Activated B cell treated with CpG ODN at 0.5 μM for 24 hours (primary cell): ENCODE measurements at regions of chr20 and their contacts with region 1.

Region 1: DNA sequence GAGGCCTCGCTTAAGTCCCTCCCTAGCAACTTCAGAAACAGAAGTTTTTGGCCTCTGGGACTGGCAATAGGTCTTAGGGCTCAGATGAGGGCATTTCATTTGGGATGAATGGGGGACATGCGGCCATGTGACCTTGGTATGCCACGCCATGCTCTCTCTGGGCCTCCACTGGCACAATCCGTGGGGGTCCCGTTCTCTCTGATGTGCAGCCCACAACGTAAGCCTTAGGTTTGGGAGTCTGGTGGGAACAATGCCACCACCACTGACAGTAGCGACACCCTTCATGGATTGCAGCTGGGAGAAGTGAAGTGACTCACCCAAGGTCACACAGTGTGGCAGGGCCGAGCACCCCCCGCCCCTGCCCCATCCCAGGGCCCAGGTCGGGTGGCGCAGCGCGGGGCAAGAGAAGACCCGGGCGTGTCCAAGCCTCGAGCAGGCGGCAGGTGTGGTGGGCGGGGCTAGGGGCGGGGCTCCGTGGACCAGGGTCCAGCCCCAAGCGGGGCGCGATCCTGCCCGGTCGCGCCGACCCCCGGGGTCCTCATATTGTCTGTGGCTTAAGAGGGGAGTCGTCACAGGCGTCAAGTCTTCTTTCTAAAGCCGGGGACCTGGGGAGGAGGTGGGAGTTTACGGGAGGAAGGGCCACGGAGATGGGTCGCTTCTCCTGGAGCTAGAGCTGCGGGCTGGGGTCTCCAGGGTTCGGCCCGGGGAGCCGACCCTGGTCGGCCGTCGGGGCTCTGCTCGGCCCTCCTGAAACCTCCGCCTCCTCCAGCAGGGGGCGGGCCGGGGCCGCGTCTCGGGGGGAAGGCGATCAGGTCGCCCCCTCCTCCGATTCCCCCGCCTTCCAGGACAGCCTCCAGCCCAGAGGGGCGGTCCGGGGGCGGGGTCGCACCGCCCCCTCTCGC is 698 bp upstream of the CEBPB start:
- DNase-seq: no peak
- ATAC-seq: peak; percentile 69
- H3K4me3 Mint-ChIP-seq: peak overlapping the region; percentile 58
- H3K27ac Mint-ChIP-seq: no peak overlapping the region
- H3K4me1 Mint-ChIP-seq: peaks cover 27% of the 10 kb centered on the region
- H3K27me3 Mint-ChIP-seq: peaks cover 8% of the 10 kb centered on the region
- CTCF ChIP-seq: no peak

Region 2: DNA sequence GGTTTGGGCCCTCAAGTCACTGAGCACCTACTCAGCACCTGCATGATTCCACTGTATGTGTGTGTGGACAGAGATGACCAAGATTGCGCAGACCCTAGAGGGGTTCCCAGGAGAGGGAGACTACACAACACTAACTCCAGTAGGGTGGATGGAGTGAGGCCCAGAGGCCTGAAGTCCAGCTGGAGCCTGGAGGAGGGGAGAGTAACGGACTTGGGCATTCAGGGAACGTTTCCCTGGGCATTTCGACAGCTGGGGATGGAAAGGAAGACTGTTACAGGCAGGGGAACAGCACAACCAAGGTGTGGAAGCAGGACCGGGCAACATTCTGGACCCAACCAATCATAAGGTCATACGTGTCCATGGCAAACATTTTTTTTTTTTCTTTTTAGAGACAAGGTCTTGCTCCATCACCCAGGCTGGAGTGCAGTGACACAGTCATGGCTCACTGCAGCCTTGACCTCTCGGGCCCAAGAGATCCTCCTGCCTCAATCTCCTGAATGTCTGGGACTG is 10.4 kb before region 1 on chr20:
- CTCF ChIA-PET with region 1: interaction called, 3 read pairs
- POLR2A ChIA-PET with region 1: interaction called, 10 read pairs
- intact Hi-C with region 1: no loop called
- DNase-seq: no peak
- ATAC-seq: no peak
- H3K4me3 Mint-ChIP-seq: no peak overlapping the region
- H3K27ac Mint-ChIP-seq: no peak overlapping the region
- H3K4me1 Mint-ChIP-seq: no peaks in the 10 kb centered on the region
- H3K27me3 Mint-ChIP-seq: no peaks in the 10 kb centered on the region
- CTCF ChIP-seq: no peak

Region 3: DNA sequence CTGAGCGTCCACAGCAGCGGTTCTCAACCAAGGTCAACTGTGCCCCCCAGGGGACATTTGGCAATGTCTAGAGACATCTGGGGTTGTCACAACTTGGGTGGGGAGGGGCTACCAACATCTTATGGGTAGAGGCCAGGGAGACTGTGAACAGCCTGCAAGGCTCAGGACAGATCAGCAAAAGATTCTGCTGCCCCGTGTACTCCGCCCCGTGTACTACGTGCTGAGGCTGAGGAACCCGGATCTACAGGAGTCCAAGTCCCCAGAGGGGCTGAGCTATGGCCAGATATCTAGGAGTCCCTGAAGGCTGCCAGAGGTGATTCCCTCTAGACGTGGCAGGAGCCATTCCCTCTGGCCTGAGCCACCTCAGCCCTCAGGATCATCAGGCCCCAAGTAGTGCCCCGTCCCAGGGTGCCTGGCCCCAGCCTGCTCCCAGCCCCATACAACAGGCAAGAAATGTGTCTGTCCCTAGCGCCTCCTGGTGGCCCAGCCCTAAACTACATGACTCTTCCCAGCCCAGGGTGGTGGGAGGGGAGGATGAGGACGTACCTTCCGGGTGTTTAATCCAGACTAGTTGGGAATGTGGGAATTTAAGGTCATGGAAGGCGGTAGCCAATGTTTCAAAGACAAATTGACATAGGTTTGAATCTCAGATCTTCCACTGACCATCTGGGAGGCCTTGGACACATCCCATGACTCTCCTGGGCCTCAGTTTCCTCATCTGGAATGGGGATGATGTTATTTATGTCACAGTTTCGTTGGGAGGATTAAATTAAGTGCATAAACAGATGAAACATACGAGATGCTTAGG is 270.7 kb after region 1 on chr20:
- CTCF ChIA-PET with region 1: interaction called, 47 read pairs
- POLR2A ChIA-PET with region 1: interaction called, 8 read pairs
- intact Hi-C with region 1: loop called (anchors 1 kb)
- DNase-seq: peak; percentile 69
- ATAC-seq: peak; percentile 86
- H3K4me3 Mint-ChIP-seq: no peak overlapping the region
- H3K27ac Mint-ChIP-seq: no peak overlapping the region
- H3K4me1 Mint-ChIP-seq: peaks cover 5% of the 10 kb centered on the region
- H3K27me3 Mint-ChIP-seq: peaks cover 24% of the 10 kb centered on the region
- CTCF ChIP-seq: peak; percentile 42

Region 4: GRCh38 chr20:50546729-50547314 is 356.9 kb after region 1 on chr20:
- CTCF ChIA-PET with region 1: no interaction called
- POLR2A ChIA-PET with region 1: interaction called, 11 read pairs
- intact Hi-C with region 1: no loop called
- DNase-seq: no peak
- ATAC-seq: peak; percentile 78
- H3K4me3 Mint-ChIP-seq: peak overlapping the region; percentile 79
- H3K27ac Mint-ChIP-seq: peak overlapping the region; percentile 85
- H3K4me1 Mint-ChIP-seq: peaks cover 75% of the 10 kb centered on the region
- H3K27me3 Mint-ChIP-seq: no peaks in the 10 kb centered on the region
- CTCF ChIP-seq: no peak

Region 5: DNA sequence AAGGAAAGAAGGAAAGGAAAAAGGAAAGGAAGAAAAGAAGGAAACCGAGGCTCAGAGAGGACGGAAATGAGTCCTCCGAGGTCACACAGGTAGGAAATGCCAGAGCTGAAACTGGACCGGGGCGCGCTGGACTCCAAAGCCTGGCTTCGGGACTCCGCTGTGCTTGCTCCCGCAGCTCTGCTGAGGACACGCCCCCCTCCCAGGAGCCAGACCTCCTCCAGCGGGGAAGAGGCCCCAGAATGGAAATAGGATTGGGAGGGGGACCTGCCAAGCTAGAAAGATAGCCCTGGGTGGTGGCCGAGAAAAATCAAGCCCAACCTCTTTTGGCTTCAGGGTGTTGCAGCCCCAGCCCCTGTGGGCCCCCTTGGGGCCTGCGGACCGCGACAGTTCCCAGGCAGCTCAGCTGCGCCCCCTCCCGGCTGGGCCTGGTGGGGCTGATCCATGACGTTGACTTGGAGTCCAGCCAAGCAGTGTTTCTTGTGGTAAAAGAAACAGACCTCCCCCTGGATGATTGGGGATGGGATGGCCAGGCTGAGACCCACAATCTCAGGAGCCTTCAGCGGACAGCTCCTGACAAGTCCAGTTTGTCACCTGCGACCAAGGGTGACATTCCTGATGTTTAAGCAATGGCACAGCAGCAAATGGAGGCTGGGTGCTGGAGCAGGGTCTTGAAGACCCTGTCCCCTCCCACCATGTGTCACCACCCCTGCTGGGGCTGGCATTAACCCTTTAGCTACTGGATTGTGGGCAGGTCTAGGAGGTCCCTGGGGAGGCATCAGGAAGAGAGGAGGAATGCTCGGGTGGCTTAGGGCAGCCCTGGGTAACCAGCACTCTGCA is 446.0 kb after region 1 on chr20:
- CTCF ChIA-PET with region 1: interaction called, 4 read pairs
- POLR2A ChIA-PET with region 1: no interaction called
- intact Hi-C with region 1: loop called (anchors 1 kb)
- DNase-seq: peak; percentile 56
- ATAC-seq: peak; percentile 76
- H3K4me3 Mint-ChIP-seq: no peak overlapping the region
- H3K27ac Mint-ChIP-seq: no peak overlapping the region
- H3K4me1 Mint-ChIP-seq: no peaks in the 10 kb centered on the region
- H3K27me3 Mint-ChIP-seq: no peaks in the 10 kb centered on the region
- CTCF ChIP-seq: peak; percentile 22